ENCODE measurements at regions of chr2 and their contacts with region 1.

Region 1: DNA sequence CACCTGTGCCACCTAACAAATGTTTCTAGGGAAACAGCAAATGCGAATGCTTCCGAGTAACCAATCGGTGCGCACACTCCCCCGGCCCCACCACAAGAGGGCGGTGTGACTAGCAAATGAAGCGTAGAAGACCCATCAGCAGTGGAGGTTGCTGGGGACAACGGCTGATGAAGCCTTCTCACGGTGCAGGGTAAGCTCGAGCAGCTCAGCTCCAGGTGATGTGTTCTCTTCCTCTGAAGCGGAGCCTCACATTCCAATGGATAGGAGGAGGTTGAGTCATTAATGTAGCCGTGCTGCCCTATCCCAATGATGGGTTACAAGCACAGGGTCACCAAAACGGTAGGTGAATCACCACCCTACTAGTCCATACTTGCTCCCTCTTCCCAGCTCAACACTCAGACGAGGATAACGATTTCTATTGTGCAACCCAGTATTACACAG is 127.6 kb upstream of the TWIST2 start:
- DNase-seq: peak; percentile 52
- ATAC-seq: peak; percentile 100
- H3K4me3 ChIP-seq: no peak overlapping the region
- H3K27ac ChIP-seq: no peak overlapping the region
- H3K4me1 ChIP-seq: peaks cover 0 to 4% of the 10 kb centered on the region in 2 experiments; a peak in 1 of 4 replicates
- H3K27me3 ChIP-seq: no peaks in the 10 kb centered on the region
- CTCF ChIP-seq: peak; percentile 73 to 97 (median 94)
- POLR2A ChIP-seq: no peak
- RAD21 ChIP-seq: peak; percentile 80

Region 2: DNA sequence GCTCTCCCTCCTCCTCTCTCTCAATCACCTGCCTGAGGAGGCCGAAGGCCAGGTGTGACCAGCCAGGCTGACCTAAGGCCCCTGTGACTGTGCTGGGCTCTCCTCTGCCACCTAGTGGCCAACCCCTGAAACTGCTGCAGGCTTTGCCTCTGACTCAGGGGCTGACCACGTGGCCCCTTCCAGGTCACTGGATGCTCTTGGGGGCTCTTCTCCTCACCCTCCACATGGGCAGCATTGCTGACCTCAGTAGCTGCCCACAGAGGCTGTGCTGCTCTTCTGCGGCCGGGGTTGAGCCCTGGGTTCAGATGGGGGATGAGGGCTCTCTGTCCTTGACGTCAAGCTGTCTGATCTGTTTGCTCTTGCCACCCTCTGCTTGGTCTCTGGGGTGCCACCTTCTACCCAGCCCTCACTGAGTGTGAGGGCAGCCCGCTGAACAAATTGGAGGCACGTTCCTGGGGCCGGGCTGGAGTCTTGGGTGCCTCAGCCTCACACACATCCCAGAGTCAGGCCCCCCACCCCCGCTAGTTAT is 250.4 kb after region 1 on chr2:
- CTCF ChIA-PET with region 1: no interaction called
- POLR2A ChIA-PET with region 1: no interaction called
- RAD21 ChIA-PET with region 1: no interaction called
- intact Hi-C with region 1: loop called (anchors 1 kb)
- DNase-seq: peak; percentile 33
- ATAC-seq: peak; percentile 93
- H3K4me3 ChIP-seq: no peak overlapping the region
- H3K27ac ChIP-seq: no peak overlapping the region
- H3K4me1 ChIP-seq: peaks cover 0 to 15% of the 10 kb centered on the region in 2 experiments; a peak in 2 of 4 replicates
- H3K27me3 ChIP-seq: no peaks in the 10 kb centered on the region
- CTCF ChIP-seq: peak; percentile 84 to 99 (median 98)
- POLR2A ChIP-seq: no peak
- RAD21 ChIP-seq: peak; percentile 93